ENCODE measurements at regions of chr13 and their contacts with region 1.

Region 1: GRCh38 chr13:29855784-29856183 is 5.4 kb upstream of the UBL3 start:
- DNase-seq: no peak
- H3K4me3 Mint-ChIP-seq: no peak overlapping the region
- H3K27ac Mint-ChIP-seq: peak overlapping the region; percentile 40
- H3K4me1 Mint-ChIP-seq: peaks cover 39% of the 10 kb centered on the region
- H3K27me3 Mint-ChIP-seq: no peaks in the 10 kb centered on the region

Region 2: DNA sequence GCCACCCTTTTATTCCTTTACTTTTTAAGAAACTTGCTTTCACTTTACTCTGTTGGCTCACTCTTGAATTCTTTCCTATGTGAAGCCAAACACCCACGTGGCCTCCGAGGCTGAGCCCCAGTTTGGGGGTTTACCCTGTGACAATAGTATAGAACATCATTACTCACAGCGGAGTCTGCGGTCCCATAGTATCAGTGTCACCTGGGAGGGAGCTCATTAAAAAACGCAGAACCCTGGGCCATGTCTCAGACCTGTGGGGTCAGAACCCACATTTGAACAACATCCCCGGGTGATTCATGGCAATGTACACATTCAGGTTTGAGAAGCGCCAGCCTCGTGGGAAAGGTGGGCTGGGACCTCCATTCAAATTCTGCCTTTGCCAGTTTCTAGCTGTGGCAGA is 30.7 kb after region 1 on chr13:
- CTCF ChIA-PET with region 1: no interaction called
- POLR2A ChIA-PET with region 1: no interaction called
- intact Hi-C with region 1: loop called (anchors 2 kb)
- DNase-seq: peak; percentile 77
- H3K4me3 Mint-ChIP-seq: no peak overlapping the region
- H3K27ac Mint-ChIP-seq: no peak overlapping the region
- H3K4me1 Mint-ChIP-seq: peaks cover 14% of the 10 kb centered on the region
- H3K27me3 Mint-ChIP-seq: no peaks in the 10 kb centered on the region